Left colon (tissue), 2 donors: ENCODE measurements at regions of chr1 and their contacts with region 1.

Region 1: GRCh38 chr1:111769517-111770146 is 13.9 kb downstream of the DDX20 start:
- DNase-seq: peak in 1 of 2 donors; percentile 23
- ATAC-seq: peak; percentile 44

Region 2: GRCh38 chr1:111222308-111223125 is 547.1 kb before region 1 on chr1:
- intact Hi-C with region 1: loop called in 1 of 2 experiments (anchors 10 kb)
- DNase-seq: peak; percentile 65 to 83
- ATAC-seq: peak; percentile 92

Region 3: DNA sequence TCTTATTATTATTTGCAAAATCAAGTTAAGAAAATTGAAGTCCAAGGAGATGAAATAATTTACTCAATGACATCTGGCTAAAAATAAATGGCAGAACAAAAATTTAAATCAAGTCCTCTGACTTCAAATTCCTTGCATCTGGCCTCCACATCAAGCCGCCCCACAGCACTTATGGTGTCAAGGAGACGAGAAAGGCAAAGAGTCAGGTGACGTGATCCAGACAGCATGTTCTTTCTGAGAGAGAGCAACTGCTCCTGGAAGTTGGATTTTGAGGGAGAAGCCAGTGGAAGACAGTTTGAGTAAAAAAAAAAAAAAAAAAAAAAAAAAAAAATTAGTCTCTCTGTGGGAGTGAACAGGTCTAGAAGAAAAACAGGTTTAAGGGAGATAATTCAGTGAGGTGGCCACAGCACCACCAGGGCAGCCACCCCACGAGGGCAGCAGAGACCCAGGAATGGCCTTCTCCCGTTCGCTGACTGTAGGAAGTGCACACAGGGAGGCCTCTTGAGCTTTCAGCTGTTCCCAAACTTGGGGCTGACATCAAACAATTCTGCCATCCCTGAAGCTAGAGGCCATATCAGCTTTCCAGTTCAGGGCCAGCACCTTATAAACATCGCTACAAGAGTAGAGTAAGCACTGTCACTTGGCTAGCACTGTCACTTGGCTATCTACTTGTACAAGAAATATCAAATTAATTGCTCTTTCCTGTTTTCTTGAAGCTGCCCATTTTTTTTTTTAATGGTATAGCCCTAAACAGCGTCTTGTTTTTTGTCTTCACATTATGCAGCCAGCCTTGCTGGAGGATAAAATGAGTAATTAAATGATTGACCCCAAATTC is 288.0 kb before region 1 on chr1:
- intact Hi-C with region 1: loop called in 1 of 2 experiments (anchors 5 kb)
- DNase-seq: peak; percentile 68 to 81
- ATAC-seq: peak; percentile 100

Region 4: GRCh38 chr1:111719674-111720132 is 49.9 kb before region 1 on chr1:
- intact Hi-C with region 1: loop called in 1 of 2 experiments (anchors 10 kb)
- DNase-seq: no peak
- ATAC-seq: peak; percentile 45

Region 5: GRCh38 chr1:111992476-111992875 is 222.8 kb after region 1 on chr1:
- intact Hi-C with region 1: no loop called
- DNase-seq: no peak
- ATAC-seq: no peak